CD8-positive, alpha-beta T cell (primary cell): ENCODE measurements at regions of chr12 and their contacts with region 1.

Region 1: GRCh38 chr12:14970473-14970872 is 2.4 kb upstream of the PDE6H start:
- DNase-seq: no peak
- ATAC-seq: no peak
- H3K4me3 ChIP-seq: no peak overlapping the region
- H3K4me3 Mint-ChIP-seq: no peak overlapping the region
- H3K27ac ChIP-seq: no peak overlapping the region
- H3K27ac Mint-ChIP-seq: no peak overlapping the region
- H3K4me1 ChIP-seq: peaks cover 12% of the 10 kb centered on the region
- H3K4me1 Mint-ChIP-seq: peaks cover 59% of the 10 kb centered on the region
- H3K27me3 ChIP-seq: no peaks in the 10 kb centered on the region
- H3K27me3 Mint-ChIP-seq: no peaks in the 10 kb centered on the region
- CTCF ChIP-seq: no peak

Region 2: GRCh38 chr12:14986449-14986848 is 16.0 kb after region 1 on chr12:
- CTCF ChIA-PET with region 1: interaction called, 3 read pairs
- POLR2A ChIA-PET with region 1: interaction called, 3 read pairs
- intact Hi-C with region 1: loop called (anchors 2 kb)
- DNase-seq: peak in 2 of 9 experiments; percentile 28 to 43
- ATAC-seq: no peak
- H3K4me3 ChIP-seq: no peak overlapping the region
- H3K4me3 Mint-ChIP-seq: no peak overlapping the region
- H3K27ac ChIP-seq: no peak overlapping the region
- H3K27ac Mint-ChIP-seq: no peak overlapping the region
- H3K4me1 ChIP-seq: peaks cover 31% of the 10 kb centered on the region
- H3K4me1 Mint-ChIP-seq: peaks cover 41% of the 10 kb centered on the region
- H3K27me3 ChIP-seq: no peaks in the 10 kb centered on the region
- H3K27me3 Mint-ChIP-seq: no peaks in the 10 kb centered on the region
- CTCF ChIP-seq: no peak